Prostate gland (tissue), 2 donors: ENCODE measurements at regions of chr14 and their contacts with region 1.

Region 1: DNA sequence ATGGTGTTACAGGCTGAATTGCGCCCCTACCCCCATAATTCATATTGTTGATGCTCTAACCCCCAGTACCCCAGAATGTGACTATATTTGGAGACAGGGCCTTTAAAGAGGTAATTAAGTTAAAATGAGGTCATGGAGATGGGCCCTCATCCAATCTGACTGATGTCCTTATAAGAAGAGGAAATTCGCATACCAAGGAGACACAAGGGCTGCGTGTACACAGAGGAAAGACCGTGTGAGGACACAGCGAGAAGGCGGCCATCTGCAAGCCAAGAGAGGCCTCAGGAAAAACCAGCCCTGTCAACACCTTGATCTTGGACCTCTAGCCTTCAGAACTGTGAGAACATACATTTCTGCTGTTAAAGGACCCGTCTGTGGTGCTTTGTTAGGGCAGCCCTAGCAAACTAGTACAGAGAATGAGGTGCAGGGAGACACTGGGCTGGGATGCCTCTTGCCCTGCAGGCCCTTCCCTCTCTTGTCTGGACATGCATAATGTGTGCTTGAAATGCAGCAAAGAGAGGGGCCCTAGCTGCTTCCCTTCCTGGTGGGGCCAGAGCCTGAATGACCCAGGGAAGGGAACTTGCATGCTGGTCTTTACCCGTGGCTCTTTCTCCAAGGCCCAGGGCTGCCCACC is 50.2 kb upstream of the GPATCH2L start:
- DNase-seq: no peak
- H3K4me3 ChIP-seq: no peak overlapping the region
- H3K27ac ChIP-seq: peak overlapping the region; percentile 31 to 63
- H3K4me1 ChIP-seq: no peaks in the 10 kb centered on the region
- H3K27me3 ChIP-seq: no peaks in the 10 kb centered on the region
- CTCF ChIP-seq: no peak
- POLR2A ChIP-seq: no peak

Region 2: DNA sequence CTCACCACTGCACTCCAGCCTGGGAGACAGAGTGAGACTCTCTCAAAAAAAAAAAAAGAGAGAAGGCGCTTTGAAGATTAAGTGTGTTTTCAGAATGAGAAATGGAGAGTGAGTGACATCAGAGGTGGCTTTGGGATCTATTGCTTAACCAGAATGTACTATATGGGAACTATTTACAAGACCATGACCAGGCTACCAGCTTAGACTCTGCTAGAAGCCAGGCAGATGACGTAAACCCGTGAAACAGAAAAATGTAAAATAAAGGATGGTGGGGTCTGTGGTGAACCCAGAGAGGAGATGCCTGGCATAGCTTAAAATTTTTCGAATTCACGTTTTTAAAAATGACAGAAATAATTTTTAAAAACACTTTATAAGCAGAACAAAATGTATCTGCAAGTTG is 34.0 kb before region 1 on chr14:
- intact Hi-C with region 1: no loop called
- DNase-seq: no peak
- H3K4me3 ChIP-seq: no peak overlapping the region
- H3K27ac ChIP-seq: no peak overlapping the region
- H3K4me1 ChIP-seq: no peaks in the 10 kb centered on the region
- H3K27me3 ChIP-seq: no peaks in the 10 kb centered on the region
- CTCF ChIP-seq: no peak
- POLR2A ChIP-seq: no peak

Region 3: GRCh38 chr14:76151398-76152339 is 50.2 kb after region 1 on chr14 and contains the start of gene GPATCH2L:
- intact Hi-C with region 1: loop called (anchors 5 kb)
- DNase-seq: peak; percentile 87
- H3K4me3 ChIP-seq: peak within 1 kb of the TSS; percentile 78 to 90
- H3K27ac ChIP-seq: peak within 1 kb of the TSS; percentile 73 to 75
- H3K4me1 ChIP-seq: peaks cover 19% of the 10 kb centered on the region
- H3K27me3 ChIP-seq: no peaks in the 10 kb centered on the region
- CTCF ChIP-seq: peak in 1 of 4 experiments; percentile 12
- POLR2A ChIP-seq: peak; percentile 66
- total RNA-seq, gene GPATCH2L: 39.0 to 60.3 TPM

Region 4: DNA sequence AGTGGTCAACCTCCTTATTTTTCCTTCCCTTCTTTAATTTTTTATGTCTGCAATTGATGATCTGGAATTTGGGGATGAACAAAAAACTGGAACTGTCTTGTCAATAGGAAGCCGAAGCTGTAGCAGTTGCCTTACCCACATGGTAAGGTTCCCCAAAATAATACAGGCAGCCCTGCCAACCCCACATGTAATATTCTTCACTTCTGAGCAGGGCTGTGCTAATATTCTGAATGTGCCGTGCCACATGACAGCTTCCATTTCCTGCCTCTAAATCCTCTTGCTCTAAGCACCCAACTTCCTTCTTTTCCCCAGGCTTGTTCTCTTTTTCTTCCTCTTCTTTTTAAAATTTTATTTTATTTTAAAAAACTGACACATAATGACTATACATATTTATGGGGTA is 89.8 kb after region 1 on chr14:
- intact Hi-C with region 1: no loop called
- DNase-seq: no peak
- H3K4me3 ChIP-seq: no peak overlapping the region
- H3K27ac ChIP-seq: no peak overlapping the region
- H3K4me1 ChIP-seq: no peaks in the 10 kb centered on the region
- H3K27me3 ChIP-seq: no peaks in the 10 kb centered on the region
- CTCF ChIP-seq: no peak
- POLR2A ChIP-seq: no peak

Region 5: GRCh38 chr14:76320486-76320885 is 219.0 kb after region 1 on chr14:
- intact Hi-C with region 1: no loop called
- DNase-seq: no peak
- H3K4me3 ChIP-seq: no peak overlapping the region
- H3K27ac ChIP-seq: no peak overlapping the region
- H3K4me1 ChIP-seq: no peaks in the 10 kb centered on the region
- H3K27me3 ChIP-seq: no peaks in the 10 kb centered on the region
- CTCF ChIP-seq: no peak
- POLR2A ChIP-seq: no peak